PC-9 (cell line): ENCODE measurements at regions of chr1 and their contacts with region 1.

Region 1: GRCh38 chr1:183281553-183282091 is 95.6 kb downstream of the LAMC2 start:
- DNase-seq: peak; percentile 77 to 91
- H3K4me3 ChIP-seq: no peak overlapping the region
- H3K27ac ChIP-seq: peak overlapping the region; percentile 45; the same call in 1 of the 2 replicates
- H3K4me1 ChIP-seq: peaks cover 54% of the 10 kb centered on the region
- H3K27me3 ChIP-seq: no peaks in the 10 kb centered on the region
- CTCF ChIP-seq: peak; percentile 96

Region 2: DNA sequence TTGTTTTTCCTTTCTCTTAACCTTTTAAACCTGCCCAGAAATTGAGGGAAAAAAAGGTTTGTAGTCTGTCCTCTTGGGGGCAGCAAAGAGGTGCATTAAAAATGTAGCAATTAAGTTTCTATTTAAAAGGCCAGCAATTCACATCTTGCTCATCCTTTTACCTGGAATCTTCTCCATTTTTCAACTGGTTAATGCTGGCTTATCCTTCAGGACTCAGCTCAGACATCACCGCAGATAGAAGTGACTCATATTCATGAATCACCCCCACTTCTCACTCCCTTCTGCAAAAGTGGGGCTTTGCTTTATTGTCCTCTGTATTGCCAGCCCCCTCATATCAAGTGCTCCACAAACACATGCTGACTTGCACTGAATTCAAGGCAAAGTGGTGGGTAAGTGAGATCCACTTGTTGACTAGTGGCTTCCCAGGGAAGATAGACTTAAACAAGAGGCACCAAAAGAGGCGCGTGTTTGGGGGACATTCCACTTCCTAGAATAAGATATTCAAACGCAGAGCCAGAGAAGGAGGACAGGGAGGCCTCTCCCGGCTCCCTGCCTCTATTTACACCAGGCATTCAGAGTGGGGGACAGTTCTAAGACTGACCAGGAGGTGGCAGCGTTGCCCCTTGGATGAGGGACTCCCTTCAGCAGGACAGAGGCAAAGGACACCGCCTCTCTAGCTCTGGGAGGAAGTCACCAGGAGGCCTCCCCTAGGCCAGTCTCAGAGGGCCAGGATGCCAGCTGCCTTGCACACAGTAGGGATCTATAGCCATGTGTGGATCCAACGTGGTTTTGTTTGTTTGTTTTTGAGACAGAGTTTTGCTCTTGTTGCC is 1196.9 kb before region 1 on chr1:
- CTCF ChIA-PET with region 1: no interaction called
- POLR2A ChIA-PET with region 1: no interaction called
- intact Hi-C with region 1: loop called (anchors 10 kb)
- DNase-seq: peak; percentile 59 to 82
- H3K4me3 ChIP-seq: no peak overlapping the region
- H3K27ac ChIP-seq: no peak overlapping the region
- H3K4me1 ChIP-seq: peaks cover 30% of the 10 kb centered on the region
- H3K27me3 ChIP-seq: 0 out of 2 replicates have a peak, but pooled peaks cover 3% of the 10 kb centered on the region
- CTCF ChIP-seq: peak; percentile 90

Region 3: DNA sequence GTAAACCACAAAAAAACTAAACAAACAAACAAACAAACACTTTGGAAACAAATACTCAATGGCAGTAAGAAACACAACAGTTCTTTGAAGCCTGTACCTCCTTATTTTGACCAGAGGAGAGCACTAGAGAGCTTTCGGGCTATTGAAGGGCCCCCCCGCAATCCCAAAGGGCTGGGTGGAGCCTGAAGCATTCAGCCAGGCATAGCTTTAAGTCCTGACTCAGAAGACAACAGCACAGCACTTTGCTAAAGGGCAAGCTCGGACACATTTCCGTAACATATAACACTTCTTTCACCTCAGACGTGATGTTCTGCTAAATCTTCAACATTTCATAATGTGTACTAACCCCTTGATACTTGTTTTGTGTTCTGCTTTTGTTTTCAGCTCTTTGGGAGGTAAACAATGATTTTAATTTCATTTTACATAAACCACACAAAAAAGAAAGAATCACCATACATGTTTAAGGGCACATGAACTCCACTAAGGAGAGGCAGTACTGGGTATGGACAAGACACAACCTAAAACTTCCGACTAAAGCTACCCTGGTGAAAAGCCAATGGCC is 319.0 kb before region 1 on chr1:
- CTCF ChIA-PET with region 1: interaction called, 3 read pairs
- POLR2A ChIA-PET with region 1: no interaction called
- intact Hi-C with region 1: loop called (anchors 1 kb)
- DNase-seq: peak; percentile 70 to 82
- H3K4me3 ChIP-seq: peak overlapping the region; percentile 41; the same call in 1 of the 2 replicates
- H3K27ac ChIP-seq: peak overlapping the region; percentile 59
- H3K4me1 ChIP-seq: peaks cover 13% of the 10 kb centered on the region
- H3K27me3 ChIP-seq: no peaks in the 10 kb centered on the region
- CTCF ChIP-seq: peak; percentile 95

Region 4: GRCh38 chr1:183318433-183318832 is 36.8 kb after region 1 on chr1:
- CTCF ChIA-PET with region 1: interaction called, 3 read pairs
- POLR2A ChIA-PET with region 1: interaction called, 3 read pairs
- intact Hi-C with region 1: loop called (anchors 1 kb)
- DNase-seq: peak; percentile 60 to 70
- H3K4me3 ChIP-seq: no peak overlapping the region
- H3K27ac ChIP-seq: peak overlapping the region; percentile 22; the same call in 1 of the 2 replicates
- H3K4me1 ChIP-seq: peaks cover 33% of the 10 kb centered on the region
- H3K27me3 ChIP-seq: no peaks in the 10 kb centered on the region
- CTCF ChIP-seq: peak; percentile 62

Region 5: GRCh38 chr1:183366116-183366515 is 84.5 kb after region 1 on chr1:
- CTCF ChIA-PET with region 1: no interaction called
- POLR2A ChIA-PET with region 1: no interaction called
- intact Hi-C with region 1: no loop called
- DNase-seq: no peak
- H3K4me3 ChIP-seq: no peak overlapping the region
- H3K27ac ChIP-seq: 0 out of 2 replicates have a peak overlapping the region, but pooled peaks have one; percentile 26
- H3K4me1 ChIP-seq: peaks cover 57% of the 10 kb centered on the region
- H3K27me3 ChIP-seq: no peaks in the 10 kb centered on the region
- CTCF ChIP-seq: no peak

Region 6: GRCh38 chr1:183543619-183544204 is 262.1 kb after region 1 on chr1:
- CTCF ChIA-PET with region 1: no interaction called
- POLR2A ChIA-PET with region 1: no interaction called
- intact Hi-C with region 1: loop called (anchors 2 kb)
- DNase-seq: peak in 1 of 2 experiments; percentile 7
- H3K4me3 ChIP-seq: no peak overlapping the region
- H3K27ac ChIP-seq: peak overlapping the region; percentile 11; the same call in 1 of the 2 replicates
- H3K4me1 ChIP-seq: no peaks in the 10 kb centered on the region
- H3K27me3 ChIP-seq: no peaks in the 10 kb centered on the region
- CTCF ChIP-seq: peak; percentile 81

Region 7: GRCh38 chr1:183635606-183636333 is 354.1 kb after region 1 on chr1 and contains the start of gene ARPC5:
- CTCF ChIA-PET with region 1: no interaction called
- POLR2A ChIA-PET with region 1: interaction called, 10 read pairs
- intact Hi-C with region 1: no loop called
- DNase-seq: peak; percentile 89 to 96
- H3K4me3 ChIP-seq: peak within 1 kb of the TSS; percentile 98
- H3K27ac ChIP-seq: peak within 1 kb of the TSS; percentile 69
- H3K4me1 ChIP-seq: peaks cover 36% of the 10 kb centered on the region
- H3K27me3 ChIP-seq: no peaks in the 10 kb centered on the region
- CTCF ChIP-seq: no peak
- total RNA-seq, gene ARPC5: 143 and 150 TPM in 2 replicates